ENCODE measurements at regions of chr5 and their contacts with region 1.

Region 1: DNA sequence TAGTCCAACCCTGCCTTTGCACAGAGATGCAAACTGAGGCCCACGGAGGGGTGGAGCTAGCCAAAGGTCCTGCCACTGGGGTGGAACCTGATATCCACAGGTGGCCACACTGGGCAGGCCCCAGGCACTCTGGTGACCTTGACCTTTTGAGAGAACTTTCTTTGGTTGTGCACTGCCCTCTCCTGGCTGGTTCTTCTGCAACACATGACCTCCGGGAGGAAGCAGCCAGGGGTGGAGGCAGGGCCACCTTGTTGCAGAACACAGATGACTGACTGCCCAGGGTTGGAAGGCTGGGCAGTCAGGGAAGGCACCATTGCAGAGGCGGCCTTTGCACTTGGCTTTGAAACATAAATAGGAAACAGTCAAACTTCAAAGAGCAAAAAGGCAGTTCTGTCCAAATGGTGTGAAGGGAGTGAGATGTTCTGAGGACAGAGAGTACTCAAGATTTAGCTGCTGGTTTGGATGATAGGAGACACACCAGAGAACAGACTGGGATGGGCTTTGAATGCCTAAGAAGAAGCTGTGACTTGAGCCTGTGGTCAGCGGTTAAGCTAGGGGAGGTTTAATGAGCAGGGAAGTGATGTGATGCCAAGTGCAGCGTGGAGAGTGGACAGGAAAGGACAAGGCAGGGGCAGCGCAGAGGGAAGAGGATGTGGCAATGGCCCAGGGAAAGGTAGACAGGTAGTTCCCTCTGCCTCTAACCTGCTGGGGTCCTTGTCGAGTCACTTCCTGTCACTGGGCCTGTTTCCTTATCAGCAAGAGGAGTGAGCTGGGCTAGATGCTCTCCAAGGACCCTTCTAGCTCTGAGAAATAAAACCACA is 6.8 kb upstream of the TCOF1 start:
- DNase-seq: peak; percentile 91
- H3K4me3 Mint-ChIP-seq: no peak overlapping the region
- H3K27ac Mint-ChIP-seq: no peak overlapping the region
- H3K4me1 Mint-ChIP-seq: peaks cover 6% of the 10 kb centered on the region
- H3K27me3 Mint-ChIP-seq: no peaks in the 10 kb centered on the region
- CTCF ChIP-seq: peak; percentile 94

Region 2: GRCh38 chr5:150129813-150130492 is 220.8 kb before region 1 on chr5:
- CTCF ChIA-PET with region 1: interaction called, 30 read pairs
- POLR2A ChIA-PET with region 1: no interaction called
- intact Hi-C with region 1: loop called (anchors 1 kb)
- DNase-seq: peak; percentile 90
- H3K4me3 Mint-ChIP-seq: peak overlapping the region; percentile 59
- H3K27ac Mint-ChIP-seq: no peak overlapping the region
- H3K4me1 Mint-ChIP-seq: peaks cover 25% of the 10 kb centered on the region
- H3K27me3 Mint-ChIP-seq: no peaks in the 10 kb centered on the region
- CTCF ChIP-seq: peak; percentile 98

Region 3: DNA sequence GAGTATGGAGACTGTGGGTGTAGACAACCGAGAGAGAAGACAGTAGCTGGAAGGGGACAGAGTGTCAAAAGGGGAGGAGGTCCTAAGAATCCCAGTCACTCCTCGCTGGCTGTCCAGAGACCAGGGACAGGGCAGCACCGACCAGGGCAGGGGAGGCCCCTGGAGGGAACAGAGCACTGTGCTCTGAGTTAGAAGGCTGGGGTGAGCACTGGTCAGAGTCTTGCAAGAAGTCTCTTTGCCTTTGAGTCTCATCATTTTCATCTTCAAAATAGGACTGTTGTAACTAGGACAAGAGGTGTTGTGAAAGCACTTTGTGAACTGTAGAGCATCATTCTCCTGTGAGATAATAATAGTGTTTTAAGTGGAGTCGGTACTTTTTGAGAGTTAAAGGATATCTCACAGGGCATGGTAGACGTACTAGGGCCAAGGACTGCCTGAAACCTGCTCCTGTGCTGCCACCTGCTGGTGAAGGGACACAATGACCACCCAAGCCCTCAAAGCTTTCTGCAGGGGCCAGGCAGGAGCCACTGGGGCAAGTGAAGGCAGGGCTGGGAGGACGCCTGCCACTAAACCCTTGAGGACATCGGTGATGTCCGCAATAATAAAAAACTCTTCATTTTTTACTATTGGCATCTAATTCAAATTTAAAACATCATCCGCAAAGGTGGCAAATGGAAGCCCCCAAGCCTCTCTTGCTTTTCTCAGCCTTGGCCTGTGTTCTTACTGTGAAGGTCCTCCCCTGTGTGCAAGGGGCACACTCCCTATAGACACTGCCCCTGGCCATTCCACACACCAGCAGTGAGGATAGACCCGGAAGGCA is 132.7 kb before region 1 on chr5:
- CTCF ChIA-PET with region 1: interaction called, 39 read pairs
- POLR2A ChIA-PET with region 1: no interaction called
- intact Hi-C with region 1: loop called (anchors 1 kb)
- DNase-seq: peak; percentile 93
- H3K4me3 Mint-ChIP-seq: no peak overlapping the region
- H3K27ac Mint-ChIP-seq: no peak overlapping the region
- H3K4me1 Mint-ChIP-seq: no peaks in the 10 kb centered on the region
- H3K27me3 Mint-ChIP-seq: no peaks in the 10 kb centered on the region
- CTCF ChIP-seq: peak; percentile 98

Region 4: GRCh38 chr5:150263801-150264621 is 86.7 kb before region 1 on chr5:
- CTCF ChIA-PET with region 1: interaction called, 290 read pairs
- POLR2A ChIA-PET with region 1: interaction called, 4 read pairs
- intact Hi-C with region 1: no loop called
- DNase-seq: peak; percentile 100
- H3K4me3 Mint-ChIP-seq: no peak overlapping the region
- H3K27ac Mint-ChIP-seq: peak overlapping the region; percentile 13
- H3K4me1 Mint-ChIP-seq: peaks cover 11% of the 10 kb centered on the region
- H3K27me3 Mint-ChIP-seq: no peaks in the 10 kb centered on the region
- CTCF ChIP-seq: no peak

Region 5: DNA sequence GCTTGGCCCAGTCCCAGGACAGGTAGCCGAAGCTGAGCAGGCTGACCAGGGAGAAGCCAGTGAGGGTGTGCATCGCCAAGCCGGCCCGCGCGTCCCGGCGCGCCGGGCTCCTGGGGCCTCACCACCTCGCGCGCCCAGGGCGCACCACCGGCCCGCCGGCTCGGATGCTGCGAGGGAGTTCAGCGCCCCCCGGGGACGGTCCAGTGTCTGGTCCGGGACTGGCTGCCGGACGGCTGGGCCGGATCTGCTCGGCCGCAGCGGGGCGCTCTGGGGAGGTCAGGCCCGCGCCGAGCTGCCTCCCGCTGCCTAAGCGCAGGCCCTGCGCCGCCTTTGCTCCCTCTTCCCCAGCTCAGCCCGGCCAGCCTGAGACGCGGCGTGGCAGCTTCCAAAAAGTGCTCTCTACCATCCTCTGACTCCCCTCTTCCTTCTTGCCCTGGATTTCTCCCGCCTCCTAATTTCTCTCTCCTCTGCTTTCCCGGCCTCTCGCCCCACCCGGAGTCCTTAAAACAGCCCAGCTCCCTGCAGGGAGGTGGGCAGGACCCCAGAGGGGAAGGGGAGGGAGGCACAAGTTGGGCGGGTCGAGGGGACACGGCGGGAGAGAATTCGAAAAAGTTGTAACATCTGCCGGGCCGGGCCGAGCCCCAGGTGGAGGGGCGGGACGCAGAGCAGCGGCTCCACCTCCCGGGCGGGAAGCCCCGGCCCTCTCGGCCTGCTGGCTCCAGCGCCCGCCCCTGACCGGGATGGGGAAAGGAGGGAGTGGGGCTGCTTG is 48.2 kb before region 1 on chr5 and contains the start of gene ARSI:
- CTCF ChIA-PET with region 1: interaction called, 63 read pairs
- POLR2A ChIA-PET with region 1: interaction called, 8 read pairs
- intact Hi-C with region 1: no loop called
- DNase-seq: peak; percentile 49
- H3K4me3 Mint-ChIP-seq: no peak within 1 kb of the TSS
- H3K27ac Mint-ChIP-seq: no peak within 1 kb of the TSS
- H3K4me1 Mint-ChIP-seq: peaks cover 38% of the 10 kb centered on the region
- H3K27me3 Mint-ChIP-seq: no peaks in the 10 kb centered on the region
- CTCF ChIP-seq: no peak
- total RNA-seq, gene ARSI: 0.19 and 0.25 TPM in 2 replicates

Region 6: DNA sequence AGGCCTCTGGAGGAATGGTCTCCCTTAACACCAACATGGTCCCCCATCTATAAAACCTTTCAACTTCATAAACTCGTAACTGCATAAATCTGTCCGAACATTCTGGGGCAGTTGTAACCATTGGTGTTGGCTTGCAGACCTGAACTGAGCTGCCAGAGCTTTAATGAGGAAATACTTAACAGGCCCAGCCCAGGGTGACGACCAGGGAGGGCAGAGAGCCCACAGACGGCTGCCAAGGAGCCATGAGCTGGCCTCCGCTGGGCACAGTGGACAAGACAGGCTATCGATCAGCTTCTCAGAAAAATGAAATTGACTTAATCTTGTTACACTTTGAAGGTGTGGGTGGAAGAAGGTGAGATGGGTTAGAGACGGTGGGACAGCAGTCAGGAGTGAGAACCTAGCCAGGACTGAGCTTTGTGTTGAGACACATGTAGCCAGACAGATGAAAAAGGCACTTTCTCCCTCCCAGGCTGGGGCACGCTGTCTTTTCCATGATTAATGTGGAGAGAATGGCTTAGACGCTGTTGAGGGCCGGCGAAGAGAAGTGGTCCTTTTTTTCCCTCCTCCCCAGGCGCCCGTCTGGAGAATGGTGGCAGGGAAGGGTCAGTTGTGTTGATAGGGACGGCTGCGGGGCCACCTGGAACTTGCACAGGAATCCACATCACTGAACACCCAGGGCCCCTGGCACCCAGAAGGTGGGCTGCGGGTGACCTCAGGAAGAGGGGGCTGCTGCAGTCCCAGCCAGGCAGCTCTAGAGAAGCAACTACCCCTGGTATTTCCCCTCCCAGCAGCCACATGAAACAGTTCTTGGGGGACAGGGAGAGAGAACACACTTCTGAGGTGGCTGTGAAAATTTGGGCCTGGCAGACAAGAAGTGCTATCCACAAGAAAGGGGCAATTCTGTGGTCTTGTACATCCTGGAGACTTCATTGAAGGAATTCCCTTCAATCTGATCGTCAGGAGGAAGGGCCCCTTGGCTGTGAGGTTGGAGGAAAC is 20.6 kb before region 1 on chr5:
- CTCF ChIA-PET with region 1: interaction called, 22 read pairs
- POLR2A ChIA-PET with region 1: interaction called, 6 read pairs
- intact Hi-C with region 1: no loop called
- DNase-seq: no peak
- H3K4me3 Mint-ChIP-seq: no peak overlapping the region
- H3K27ac Mint-ChIP-seq: no peak overlapping the region
- H3K4me1 Mint-ChIP-seq: no peaks in the 10 kb centered on the region
- H3K27me3 Mint-ChIP-seq: no peaks in the 10 kb centered on the region
- CTCF ChIP-seq: no peak